Psoas muscle (tissue), 8 donors: ENCODE measurements at regions of chr6 and their contacts with region 1.

Region 1: DNA sequence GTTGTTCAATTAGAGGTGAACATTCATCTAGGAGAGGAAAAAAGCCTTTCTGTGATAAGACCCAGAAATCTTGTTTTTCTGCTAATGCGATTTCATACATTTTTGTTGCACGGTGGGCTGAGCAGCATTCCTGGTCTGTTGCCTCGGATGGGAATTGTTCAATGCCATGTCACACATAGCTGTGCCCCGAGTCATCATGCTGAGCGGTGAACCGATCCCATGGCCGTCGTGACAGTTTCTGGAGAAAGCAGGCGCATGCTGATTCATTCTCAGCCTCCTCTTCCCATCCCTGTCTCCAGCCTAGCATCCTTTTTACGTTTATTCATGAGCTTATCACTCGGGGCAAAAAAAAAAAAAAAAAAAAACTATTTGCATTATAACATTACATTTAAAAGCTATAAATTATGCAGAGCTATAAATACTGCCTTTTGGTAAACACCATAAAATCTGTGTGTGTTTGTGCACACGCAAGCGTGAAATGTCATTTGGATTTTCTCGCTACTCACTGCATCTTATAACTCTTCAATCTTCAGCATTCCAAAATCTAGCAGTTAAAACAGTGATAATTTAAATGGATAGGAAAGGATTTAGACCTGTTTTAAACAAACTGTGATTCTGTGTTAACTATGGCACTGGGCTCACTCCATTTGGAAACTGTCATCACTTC is 58.9 kb upstream of the IFNGR1 start:
- DNase-seq: no peak
- ATAC-seq: no peak
- H3K4me3 ChIP-seq: no peak overlapping the region
- H3K27ac ChIP-seq: no peak overlapping the region
- H3K4me1 ChIP-seq: no peaks in the 10 kb centered on the region
- H3K27me3 ChIP-seq: peaks cover 0 to 3% (median 0%) of the 10 kb centered on the region in 3 donors
- CTCF ChIP-seq: no peak

Region 2: GRCh38 chr6:137155830-137156229 is 122.3 kb before region 1 on chr6:
- intact Hi-C with region 1: no loop called
- DNase-seq: no peak
- ATAC-seq: no peak
- H3K4me3 ChIP-seq: no peak overlapping the region
- H3K27ac ChIP-seq: no peak overlapping the region
- H3K4me1 ChIP-seq: no peaks in the 10 kb centered on the region
- H3K27me3 ChIP-seq: no peaks in the 10 kb centered on the region
- CTCF ChIP-seq: no peak

Region 3: DNA sequence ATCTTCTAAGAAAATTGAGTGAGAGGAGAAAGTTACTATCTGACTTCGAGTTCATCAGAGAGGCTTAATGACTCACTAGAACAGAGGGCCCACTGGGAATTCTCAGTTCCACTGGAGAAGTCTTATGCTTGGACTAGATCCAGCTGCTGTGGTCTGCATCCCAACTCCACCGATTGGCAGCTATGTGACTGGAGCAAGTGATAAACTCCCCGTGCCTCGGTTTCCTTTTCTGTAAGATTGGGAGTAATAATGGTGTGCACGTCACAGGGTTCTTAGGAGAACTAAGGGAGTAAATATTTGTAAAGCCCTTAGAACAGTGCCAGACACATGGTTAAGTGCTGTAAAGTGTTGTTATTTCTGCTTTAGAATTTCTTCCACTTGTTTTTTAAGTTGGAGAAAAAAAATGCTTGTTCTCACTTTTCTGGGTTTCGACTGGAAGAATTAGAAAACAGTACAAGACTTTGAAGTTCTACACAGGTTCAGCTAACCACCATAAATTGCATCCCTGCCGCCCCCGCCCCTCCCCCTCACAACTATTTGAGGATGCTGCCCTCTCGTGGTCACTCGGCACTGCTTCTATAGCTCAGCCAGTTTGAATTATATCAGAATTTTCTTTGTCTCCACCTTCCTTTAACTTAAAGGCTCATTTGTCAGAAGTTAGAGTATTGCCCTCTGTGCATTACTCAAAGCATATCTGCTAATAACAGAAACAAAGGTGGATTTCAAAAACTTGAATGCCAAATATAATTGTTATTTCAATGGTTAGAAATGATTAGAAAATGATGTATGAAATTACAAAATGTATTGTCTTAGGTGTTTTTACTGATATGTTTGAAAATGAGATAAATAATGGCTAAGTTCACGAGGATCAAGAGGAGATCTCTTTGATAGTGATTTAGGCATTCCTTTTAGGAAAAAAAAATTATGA is 36.1 kb after region 1 on chr6:
- intact Hi-C with region 1: loop called (anchors 2 to 5 kb)
- DNase-seq: peak; percentile 68 to 79
- ATAC-seq: peak; percentile 70 to 95 (median 79)
- H3K4me3 ChIP-seq: peak overlapping the region; percentile 34
- H3K27ac ChIP-seq: no peak overlapping the region
- H3K4me1 ChIP-seq: no peaks in the 10 kb centered on the region
- H3K27me3 ChIP-seq: no peaks in the 10 kb centered on the region
- CTCF ChIP-seq: peak; percentile 78

Region 4: DNA sequence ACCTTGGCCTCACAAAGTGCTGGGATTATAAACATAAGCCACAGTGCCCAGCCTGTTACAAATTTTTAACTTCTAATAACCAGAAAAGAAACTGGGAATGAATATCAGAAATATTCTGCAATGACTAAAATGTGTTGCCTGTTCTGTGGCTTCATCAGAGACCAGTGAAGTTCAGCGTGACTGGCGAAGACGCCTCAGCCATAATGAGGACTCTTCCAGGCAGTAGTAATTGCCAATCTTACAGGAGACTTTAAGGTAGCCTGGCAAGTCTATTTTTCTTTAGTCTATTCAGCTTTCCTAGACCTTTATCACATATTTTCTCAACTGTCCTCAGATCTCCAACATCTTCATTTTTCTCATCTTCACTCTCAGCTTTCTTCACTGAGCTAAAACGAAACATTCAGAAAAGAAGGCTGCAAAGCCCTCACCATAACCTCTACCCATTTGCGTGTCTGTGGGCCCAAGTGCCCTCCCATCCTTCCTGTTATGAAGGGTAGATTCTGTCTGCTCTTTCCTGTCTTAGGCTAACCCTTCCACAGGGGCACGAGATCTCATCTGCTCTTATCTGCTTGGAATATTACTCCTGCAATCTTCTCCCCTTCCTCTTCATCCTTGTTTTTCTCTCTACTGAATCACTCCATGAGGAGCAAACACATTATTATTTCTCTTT is 258.1 kb after region 1 on chr6:
- intact Hi-C with region 1: no loop called
- DNase-seq: no peak
- ATAC-seq: no peak
- H3K4me3 ChIP-seq: no peak overlapping the region
- H3K27ac ChIP-seq: no peak overlapping the region
- H3K4me1 ChIP-seq: no peaks in the 10 kb centered on the region
- H3K27me3 ChIP-seq: peaks cover 0 to 7% (median 5%) of the 10 kb centered on the region in 3 donors
- CTCF ChIP-seq: no peak